Activated naive CD4-positive, alpha-beta T cell treated with anti-CD3 and anti-CD28 coated beads for 36 hours (primary cell): ENCODE measurements at regions of chr4 and their contacts with region 1.

Region 1: GRCh38 chr4:107719922-107720722 is at the start of gene PAPSS1:
- DNase-seq: peak; percentile 96
- H3K4me3 Mint-ChIP-seq: peak within 1 kb of the TSS; percentile 86
- H3K27ac Mint-ChIP-seq: peak within 1 kb of the TSS; percentile 77
- H3K4me1 Mint-ChIP-seq: peaks cover 26% of the 10 kb centered on the region
- H3K27me3 Mint-ChIP-seq: no peaks in the 10 kb centered on the region
- total RNA-seq, gene PAPSS1: 28.7 to 29.1 TPM

Region 2: GRCh38 chr4:107654694-107655093 is 65.4 kb before region 1 on chr4:
- CTCF ChIA-PET with region 1: no interaction called
- intact Hi-C with region 1: loop called (anchors 5 kb)
- DNase-seq: no peak
- H3K4me3 Mint-ChIP-seq: no peak overlapping the region
- H3K27ac Mint-ChIP-seq: no peak overlapping the region
- H3K4me1 Mint-ChIP-seq: no peaks in the 10 kb centered on the region
- H3K27me3 Mint-ChIP-seq: no peaks in the 10 kb centered on the region

Region 3: GRCh38 chr4:107780665-107781064 is 60.5 kb after region 1 on chr4:
- CTCF ChIA-PET with region 1: no interaction called
- intact Hi-C with region 1: no loop called
- DNase-seq: peak; percentile 34
- H3K4me3 Mint-ChIP-seq: no peak overlapping the region
- H3K27ac Mint-ChIP-seq: no peak overlapping the region
- H3K4me1 Mint-ChIP-seq: no peaks in the 10 kb centered on the region
- H3K27me3 Mint-ChIP-seq: peaks cover 18% of the 10 kb centered on the region

Region 4: GRCh38 chr4:107930821-107931774 is 211.0 kb after region 1 on chr4 and contains the start of gene CYP2U1:
- CTCF ChIA-PET with region 1: interaction called, 4 read pairs
- intact Hi-C with region 1: loop called (anchors 1 kb)
- DNase-seq: peak; percentile 78
- H3K4me3 Mint-ChIP-seq: peak within 1 kb of the TSS; percentile 83
- H3K27ac Mint-ChIP-seq: no peak within 1 kb of the TSS
- H3K4me1 Mint-ChIP-seq: peaks cover 15% of the 10 kb centered on the region
- H3K27me3 Mint-ChIP-seq: no peaks in the 10 kb centered on the region
- total RNA-seq, gene CYP2U1: 1.5 to 1.8 TPM

Region 5: GRCh38 chr4:108533245-108533844 is 813.2 kb after region 1 on chr4:
- CTCF ChIA-PET with region 1: no interaction called
- intact Hi-C with region 1: loop called (anchors 10 kb)
- DNase-seq: no peak
- H3K4me3 Mint-ChIP-seq: peak overlapping the region; percentile 19
- H3K27ac Mint-ChIP-seq: no peak overlapping the region
- H3K4me1 Mint-ChIP-seq: peaks cover 72% of the 10 kb centered on the region
- H3K27me3 Mint-ChIP-seq: no peaks in the 10 kb centered on the region

Region 6: GRCh38 chr4:108972613-108973283 is 1252.6 kb after region 1 on chr4:
- CTCF ChIA-PET with region 1: no interaction called
- intact Hi-C with region 1: loop called (anchors 10 kb)
- DNase-seq: peak; percentile 11
- H3K4me3 Mint-ChIP-seq: no peak overlapping the region
- H3K27ac Mint-ChIP-seq: peak overlapping the region; percentile 76
- H3K4me1 Mint-ChIP-seq: peaks cover 23% of the 10 kb centered on the region
- H3K27me3 Mint-ChIP-seq: no peaks in the 10 kb centered on the region